GM12878 (cell line): ENCODE measurements at regions of chr3 and their contacts with region 1.

Region 1: DNA sequence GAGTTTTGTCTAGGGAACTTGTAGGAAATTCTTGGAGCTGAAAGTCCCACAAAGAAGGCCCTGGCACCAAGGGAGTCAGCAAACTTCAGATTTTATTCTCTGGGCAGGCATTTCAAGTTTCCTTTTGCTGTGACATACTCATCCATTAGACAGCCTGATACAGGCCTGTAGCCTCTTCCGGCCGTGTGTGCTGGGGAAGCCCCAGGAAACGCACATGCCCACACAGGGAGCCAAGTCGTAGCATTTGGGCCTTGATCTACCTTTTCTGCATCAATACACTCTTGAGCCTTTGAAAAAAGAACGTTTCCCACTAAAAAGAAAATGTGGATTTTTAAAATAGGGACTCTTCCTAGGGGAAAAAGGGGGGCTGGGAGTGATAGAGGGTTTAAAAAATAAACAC is 15.0 kb downstream of the TIGIT start:
- DNase-seq: no peak
- ATAC-seq: peak; percentile 97
- H3K4me3 ChIP-seq: no peak overlapping the region
- H3K27ac ChIP-seq: peak overlapping the region; percentile 57
- H3K4me1 ChIP-seq: peaks cover 32% of the 10 kb centered on the region
- H3K27me3 ChIP-seq: no peaks in the 10 kb centered on the region
- CTCF ChIP-seq: no peak
- EP300 ChIP-seq: no peak
- POLR2A ChIP-seq: 0 out of 2 replicates have a peak, but pooled peaks have one; percentile 44
- RAD21 ChIP-seq: no peak

Region 2: GRCh38 chr3:114213627-114214541 is 94.9 kb before region 1 on chr3:
- CTCF ChIA-PET with region 1: no interaction called
- POLR2A ChIA-PET with region 1: interaction called, 3 read pairs
- RAD21 ChIA-PET with region 1: interaction called, 10 read pairs
- SMC1A ChIA-PET with region 1: interaction called, 5 read pairs
- in situ Hi-C with region 1: no loop called
- intact Hi-C with region 1: no loop called
- DNase-seq: peak; percentile 84
- ATAC-seq: peak; percentile 91
- H3K4me3 ChIP-seq: peak overlapping the region; percentile 63
- H3K27ac ChIP-seq: peak overlapping the region; percentile 88
- H3K4me1 ChIP-seq: peaks cover 20% of the 10 kb centered on the region
- H3K27me3 ChIP-seq: no peaks in the 10 kb centered on the region; a peak in 1 of 4 replicates
- CTCF ChIP-seq: no peak
- EP300 ChIP-seq: peak; percentile 86 to 91
- POLR2A ChIP-seq: peak; percentile 74
- RAD21 ChIP-seq: no peak

Region 3: GRCh38 chr3:114329823-114330222 is 21.0 kb after region 1 on chr3:
- CTCF ChIA-PET with region 1: interaction called, 35 read pairs
- POLR2A ChIA-PET with region 1: interaction called, 26 read pairs
- RAD21 ChIA-PET with region 1: interaction called, 34 read pairs
- SMC1A ChIA-PET with region 1: interaction called, 57 read pairs
- in situ Hi-C with region 1: no loop called
- intact Hi-C with region 1: no loop called
- DNase-seq: no peak
- ATAC-seq: peak; percentile 57
- H3K4me3 ChIP-seq: no peak overlapping the region
- H3K27ac ChIP-seq: no peak overlapping the region
- H3K4me1 ChIP-seq: peaks cover 18% of the 10 kb centered on the region; the same call in 1 of the 2 replicates
- H3K27me3 ChIP-seq: no peaks in the 10 kb centered on the region
- CTCF ChIP-seq: no peak
- EP300 ChIP-seq: peak in 1 of 2 experiments; percentile 18; a peak in 1 of 4 replicates
- POLR2A ChIP-seq: no peak
- RAD21 ChIP-seq: no peak

Region 4: DNA sequence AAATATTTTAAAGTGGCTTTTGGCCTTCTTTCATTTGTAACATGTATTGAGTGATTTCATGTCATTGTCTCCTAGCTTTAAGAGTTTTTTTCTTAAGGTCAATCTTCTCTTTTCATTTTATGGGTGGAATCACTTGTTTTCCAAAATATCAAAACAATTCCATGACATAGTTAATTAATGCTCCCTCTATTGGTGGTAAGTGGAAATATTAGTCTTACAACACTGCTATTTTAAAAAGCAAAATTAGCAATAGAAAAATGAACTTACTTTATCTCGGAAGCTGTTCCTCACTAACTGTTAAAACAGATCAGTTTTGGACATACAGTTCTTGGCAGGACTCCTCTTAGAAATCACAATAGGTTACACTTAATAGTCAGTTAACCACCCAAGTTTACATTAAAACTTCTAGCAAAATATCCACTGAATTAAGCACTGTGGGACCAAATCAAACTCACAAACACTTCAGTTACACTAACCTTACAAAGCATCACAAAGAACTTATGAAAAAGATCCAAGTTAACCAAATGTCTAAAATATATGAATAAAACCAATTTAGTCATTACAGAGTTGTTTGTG is 27.4 kb after region 1 on chr3:
- CTCF ChIA-PET with region 1: interaction called, 6 read pairs
- POLR2A ChIA-PET with region 1: no interaction called
- RAD21 ChIA-PET with region 1: interaction called, 7 read pairs
- SMC1A ChIA-PET with region 1: interaction called, 14 read pairs
- in situ Hi-C with region 1: no loop called
- intact Hi-C with region 1: no loop called
- DNase-seq: no peak
- ATAC-seq: no peak
- H3K4me3 ChIP-seq: no peak overlapping the region
- H3K27ac ChIP-seq: no peak overlapping the region
- H3K4me1 ChIP-seq: peaks cover 14% of the 10 kb centered on the region; the same call in 1 of the 2 replicates
- H3K27me3 ChIP-seq: no peaks in the 10 kb centered on the region
- CTCF ChIP-seq: peak; percentile 19 to 33 (median 30); a peak in 4 of 6 replicates
- EP300 ChIP-seq: no peak
- POLR2A ChIP-seq: no peak
- RAD21 ChIP-seq: 0 out of 2 replicates have a peak, but pooled peaks have one; percentile 11